ENCODE measurements at regions of chr5 and their contacts with region 1.

Region 1: GRCh38 chr5:142420561-142421227 is 95.9 kb upstream of the SPRY4 start:
- DNase-seq: no peak
- H3K4me3 ChIP-seq: no peak overlapping the region
- H3K27ac ChIP-seq: no peak overlapping the region
- H3K4me1 ChIP-seq: peaks cover 16% of the 10 kb centered on the region
- H3K27me3 ChIP-seq: no peaks in the 10 kb centered on the region
- CTCF ChIP-seq: no peak

Region 2: DNA sequence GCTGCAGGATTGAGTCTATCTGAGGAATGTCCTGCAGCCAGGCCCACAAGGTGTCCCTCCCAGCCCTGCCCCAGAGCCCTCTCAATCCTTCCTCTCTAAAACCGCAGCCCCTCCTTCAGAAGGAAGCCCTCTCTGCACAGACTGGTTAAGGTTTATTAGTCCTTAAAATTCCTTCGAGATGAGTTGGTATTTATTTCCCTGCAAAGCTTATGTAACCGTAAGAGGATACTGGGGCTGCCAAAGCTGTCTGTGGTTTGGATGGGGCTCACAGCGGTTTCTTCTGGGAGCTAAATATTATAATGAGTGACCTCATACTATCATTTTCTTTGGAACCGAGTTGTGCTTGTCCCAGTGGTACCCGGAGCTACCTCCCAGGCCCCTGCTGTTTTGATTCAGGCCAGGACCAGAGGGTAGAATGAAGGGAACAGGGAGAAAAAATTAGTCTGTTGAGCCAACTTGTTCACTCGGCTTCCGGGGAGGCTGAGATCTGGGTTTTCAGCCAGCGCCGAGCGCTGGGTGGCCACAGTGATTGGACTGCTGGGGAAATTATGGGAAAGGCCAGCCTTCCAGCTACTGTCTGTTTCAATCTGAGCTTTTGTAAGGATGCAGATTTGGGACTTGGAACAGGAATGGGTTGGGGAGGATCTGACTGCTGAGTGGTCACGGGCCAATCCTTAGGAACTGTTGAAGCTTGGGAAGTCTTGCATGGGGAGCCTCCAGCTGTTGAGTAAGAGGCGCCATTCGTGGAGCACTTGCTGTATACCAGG is 204.6 kb before region 1 on chr5:
- CTCF ChIA-PET with region 1: no interaction called
- POLR2A ChIA-PET with region 1: no interaction called
- intact Hi-C with region 1: no loop called
- DNase-seq: peak; percentile 83 to 99
- H3K4me3 ChIP-seq: peak overlapping the region; percentile 34; the same call in 1 of the 2 replicates
- H3K27ac ChIP-seq: peak overlapping the region; percentile 62
- H3K4me1 ChIP-seq: peaks cover 41% of the 10 kb centered on the region
- H3K27me3 ChIP-seq: no peaks in the 10 kb centered on the region
- CTCF ChIP-seq: no peak

Region 3: DNA sequence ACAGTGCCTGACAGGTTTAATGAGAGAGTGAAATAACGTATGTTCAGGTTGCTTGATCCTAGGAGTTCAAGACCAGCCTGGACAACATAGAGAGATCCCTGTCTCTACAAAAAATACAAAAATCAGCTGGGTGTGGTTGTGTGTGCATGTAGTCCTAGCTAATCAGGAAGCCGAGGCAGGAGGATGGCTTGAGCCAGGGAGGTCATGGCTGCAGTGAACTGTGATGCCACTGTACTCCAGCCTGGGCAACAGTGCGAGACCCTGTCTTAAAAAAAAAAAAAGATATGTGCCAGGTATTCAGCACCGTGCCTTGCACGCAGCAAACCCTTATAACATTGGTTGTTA is 57.1 kb before region 1 on chr5:
- CTCF ChIA-PET with region 1: no interaction called
- POLR2A ChIA-PET with region 1: interaction called, 21 read pairs
- intact Hi-C with region 1: no loop called
- DNase-seq: no peak
- H3K4me3 ChIP-seq: no peak overlapping the region
- H3K27ac ChIP-seq: peak overlapping the region; percentile 94
- H3K4me1 ChIP-seq: peaks cover 60% of the 10 kb centered on the region
- H3K27me3 ChIP-seq: no peaks in the 10 kb centered on the region
- CTCF ChIP-seq: no peak

Region 4: DNA sequence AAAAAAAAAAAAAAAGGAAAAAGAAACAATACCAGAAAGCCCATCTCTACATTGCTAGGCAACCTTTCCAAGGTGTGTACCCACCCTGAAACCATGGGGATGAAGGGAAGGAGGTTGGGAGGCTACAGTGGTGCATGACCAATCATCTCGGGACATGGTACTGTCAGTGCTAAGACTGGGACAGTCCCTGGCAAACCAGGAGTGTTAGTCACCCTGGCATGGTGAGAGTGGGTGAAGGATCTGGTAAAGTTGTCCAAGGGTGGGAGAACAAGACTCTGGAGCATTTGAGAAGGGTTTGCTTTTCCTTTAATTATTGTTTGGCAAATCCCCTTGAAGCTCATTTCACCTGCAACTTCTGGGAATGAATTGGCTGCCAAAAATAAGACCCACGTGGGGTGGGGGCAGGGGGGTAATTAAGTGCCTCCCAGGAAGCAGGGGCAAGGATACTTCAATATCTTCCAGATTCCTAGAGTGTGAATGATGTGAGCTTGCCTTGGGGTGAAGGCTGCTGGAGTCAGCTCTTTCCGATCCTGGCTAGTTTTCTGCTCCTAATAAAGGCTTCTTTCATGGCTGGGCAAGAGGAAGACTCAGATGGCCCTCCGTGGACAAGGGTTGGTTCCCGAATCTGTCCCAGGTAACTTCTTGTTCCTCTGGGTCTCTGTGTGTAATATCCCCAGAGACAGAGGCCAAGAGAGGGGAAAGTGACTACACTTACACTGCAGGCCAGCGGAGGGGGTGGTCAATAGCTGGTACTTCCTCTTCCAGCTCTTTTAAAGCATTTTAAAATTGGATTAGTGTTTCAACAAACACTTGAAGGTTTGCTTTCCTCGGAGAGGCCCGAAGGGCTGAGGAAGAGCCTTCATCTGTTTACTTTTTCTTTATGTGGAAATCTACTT is 34.3 kb before region 1 on chr5:
- CTCF ChIA-PET with region 1: no interaction called
- POLR2A ChIA-PET with region 1: interaction called, 20 read pairs
- intact Hi-C with region 1: no loop called
- DNase-seq: no peak
- H3K4me3 ChIP-seq: no peak overlapping the region
- H3K27ac ChIP-seq: peak overlapping the region; percentile 94
- H3K4me1 ChIP-seq: peaks cover 75% of the 10 kb centered on the region
- H3K27me3 ChIP-seq: no peaks in the 10 kb centered on the region
- CTCF ChIP-seq: no peak